H1 (cell line): ENCODE measurements at regions of chr5 and their contacts with region 1.

Region 1: DNA sequence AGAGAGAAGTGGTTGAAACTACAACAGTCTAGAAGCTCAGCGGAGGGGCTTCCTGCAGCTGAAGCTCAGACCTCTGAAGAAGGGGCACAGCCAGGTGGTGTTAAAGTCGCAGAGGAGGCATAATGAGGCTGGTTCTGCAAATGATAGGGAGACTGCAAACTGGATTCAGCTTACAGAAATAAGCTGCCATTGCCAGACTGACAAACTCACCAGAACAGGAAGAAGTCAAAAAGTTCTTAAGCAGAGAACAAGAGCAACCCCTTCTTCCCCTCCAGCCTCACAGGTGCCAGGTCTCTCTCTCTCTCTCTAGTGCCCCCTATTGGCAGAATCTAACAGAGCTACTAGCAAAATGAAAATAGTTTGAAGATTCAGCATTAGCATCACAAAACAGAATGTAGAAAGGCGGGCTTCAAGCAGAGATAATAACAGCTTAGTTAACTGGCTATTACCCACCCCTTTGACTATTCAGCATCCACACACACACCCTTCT is 76.7 kb downstream of the GRAMD2B start:
- DNase-seq: peak; percentile 9 to 48
- H3K4me3 ChIP-seq: no peak overlapping the region
- H3K27ac ChIP-seq: no peak overlapping the region
- H3K4me1 ChIP-seq: no peaks in the 10 kb centered on the region; a peak in 1 of 7 replicates
- H3K27me3 ChIP-seq: no peaks in the 10 kb centered on the region
- CTCF ChIP-seq: peak in 2 of 3 experiments; percentile 59 to 83; a peak in 3 of 4 replicates
- EP300 ChIP-seq: no peak
- POLR2A ChIP-seq: no peak
- RAD21 ChIP-seq: peak; percentile 56 to 64

Region 2: GRCh38 chr5:126248611-126249010 is 251.3 kb before region 1 on chr5:
- CTCF ChIA-PET with region 1: no interaction called
- POLR2A ChIA-PET with region 1: no interaction called
- DNase-seq: no peak
- H3K4me3 ChIP-seq: no peak overlapping the region
- H3K27ac ChIP-seq: no peak overlapping the region
- H3K4me1 ChIP-seq: no peaks in the 10 kb centered on the region
- H3K27me3 ChIP-seq: no peaks in the 10 kb centered on the region
- CTCF ChIP-seq: no peak
- EP300 ChIP-seq: no peak
- POLR2A ChIP-seq: no peak
- RAD21 ChIP-seq: no peak

Region 3: DNA sequence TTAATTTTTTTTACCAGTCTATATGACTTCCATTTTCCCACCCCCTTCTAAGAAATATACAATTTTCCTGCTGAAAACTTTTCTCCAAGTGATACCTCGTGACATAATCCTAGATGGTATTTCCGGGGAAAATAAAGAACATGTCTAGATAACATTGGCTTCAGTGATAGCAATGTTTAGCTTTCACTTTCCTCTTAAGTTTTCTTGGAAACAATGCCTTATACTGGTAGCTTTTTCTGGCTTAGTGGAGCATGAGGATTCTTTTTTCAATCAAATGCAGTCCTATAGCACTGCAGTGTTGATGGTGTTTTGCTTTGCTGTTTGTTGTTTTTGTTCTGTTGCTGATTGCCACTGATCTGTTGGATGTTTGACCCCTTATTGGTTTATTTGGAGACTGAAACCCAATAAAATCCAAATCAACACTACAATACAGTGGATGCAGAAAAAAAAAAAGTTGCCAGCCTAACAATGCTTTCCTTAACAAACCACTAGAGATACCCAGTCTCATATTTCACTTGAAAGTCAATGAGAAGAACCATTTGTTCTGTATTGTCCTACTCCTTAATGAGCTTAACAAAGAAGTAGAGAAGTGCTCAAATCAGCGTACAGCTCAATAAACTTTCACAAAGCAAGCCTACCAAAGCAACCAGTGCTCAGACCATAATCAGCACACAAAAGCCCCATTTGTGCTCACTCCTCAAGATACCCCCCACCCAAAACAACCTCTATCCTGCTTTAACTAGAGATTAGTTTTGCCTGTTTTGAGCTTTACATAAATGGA is 150.9 kb before region 1 on chr5:
- CTCF ChIA-PET with region 1: interaction called, 26 read pairs
- POLR2A ChIA-PET with region 1: no interaction called
- DNase-seq: no peak
- H3K4me3 ChIP-seq: peak overlapping the region in 1 of 4 experiments; percentile 19; a peak in 1 of 8 replicates
- H3K27ac ChIP-seq: no peak overlapping the region; the same call in 1 of the 2 replicates
- H3K4me1 ChIP-seq: peaks cover 0 to 13% (median 10%) of the 10 kb centered on the region in 4 experiments; a peak in 5 of 7 replicates
- H3K27me3 ChIP-seq: no peaks in the 10 kb centered on the region
- CTCF ChIP-seq: no peak
- EP300 ChIP-seq: no peak
- POLR2A ChIP-seq: no peak
- RAD21 ChIP-seq: no peak

Region 4: GRCh38 chr5:126422989-126423788 is 76.7 kb before region 1 on chr5 and contains the start of gene GRAMD2B:
- CTCF ChIA-PET with region 1: interaction called, 11 read pairs
- POLR2A ChIA-PET with region 1: no interaction called
- DNase-seq: peak; percentile 64 to 82
- H3K4me3 ChIP-seq: peak within 1 kb of the TSS; percentile 55 to 88 (median 82)
- H3K27ac ChIP-seq: peak within 1 kb of the TSS; percentile 77
- H3K4me1 ChIP-seq: peaks cover 0 to 7% (median 3%) of the 10 kb centered on the region in 4 experiments; a peak in 4 of 7 replicates
- H3K27me3 ChIP-seq: no peaks in the 10 kb centered on the region
- CTCF ChIP-seq: no peak
- EP300 ChIP-seq: no peak
- POLR2A ChIP-seq: peak in 1 of 2 experiments; percentile 79; a peak in 2 of 3 replicates
- RAD21 ChIP-seq: 0 out of 4 replicates have a peak, but pooled peaks of 1 of the 2 experiments have one; percentile 2
- total RNA-seq, gene GRAMD2B: 9.4 and 11.7 TPM in 2 replicates

Region 5: GRCh38 chr5:126519634-126520592 is 20.0 kb after region 1 on chr5:
- CTCF ChIA-PET with region 1: interaction called, 87 read pairs
- POLR2A ChIA-PET with region 1: interaction called, 3 read pairs
- DNase-seq: peak in 1 of 2 experiments; percentile 41
- H3K4me3 ChIP-seq: no peak overlapping the region
- H3K27ac ChIP-seq: no peak overlapping the region
- H3K4me1 ChIP-seq: peaks cover 0 to 2% (median 0%) of the 10 kb centered on the region in 4 experiments; a peak in 2 of 7 replicates
- H3K27me3 ChIP-seq: no peaks in the 10 kb centered on the region
- CTCF ChIP-seq: no peak
- EP300 ChIP-seq: no peak
- POLR2A ChIP-seq: no peak
- RAD21 ChIP-seq: no peak

Region 6: DNA sequence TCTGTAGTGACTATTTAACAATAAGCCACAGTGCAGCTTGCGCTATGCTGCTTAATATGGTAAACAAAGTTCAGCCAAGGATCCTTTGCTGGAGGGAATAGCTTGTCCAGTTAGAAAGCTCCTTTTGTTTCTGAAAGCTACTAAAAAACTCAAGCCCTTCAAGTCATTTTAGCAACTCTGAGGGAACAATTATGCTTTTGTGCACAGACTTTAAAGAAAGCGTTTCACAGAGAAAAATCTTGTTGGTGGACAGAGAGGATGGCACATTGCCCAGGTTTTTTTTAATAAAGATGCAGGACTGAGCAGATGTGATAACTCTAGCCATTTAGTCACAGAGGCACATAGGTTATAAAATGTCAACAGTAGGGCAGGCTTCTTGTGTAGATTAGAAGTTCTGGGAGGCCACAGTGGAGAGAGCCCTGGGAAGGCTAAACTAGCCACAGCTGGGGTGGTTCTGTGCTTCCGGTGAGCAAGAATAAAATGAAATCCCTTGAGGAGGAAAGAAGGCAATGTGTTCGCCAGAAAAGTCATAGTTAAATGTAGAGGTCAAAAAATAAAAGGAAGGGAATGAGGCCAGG is 31.7 kb after region 1 on chr5:
- CTCF ChIA-PET with region 1: interaction called, 34 read pairs
- POLR2A ChIA-PET with region 1: no interaction called
- DNase-seq: peak in 1 of 2 experiments; percentile 29
- H3K4me3 ChIP-seq: no peak overlapping the region
- H3K27ac ChIP-seq: no peak overlapping the region
- H3K4me1 ChIP-seq: no peaks in the 10 kb centered on the region
- H3K27me3 ChIP-seq: no peaks in the 10 kb centered on the region
- CTCF ChIP-seq: no peak
- EP300 ChIP-seq: no peak
- POLR2A ChIP-seq: no peak
- RAD21 ChIP-seq: no peak

Region 7: DNA sequence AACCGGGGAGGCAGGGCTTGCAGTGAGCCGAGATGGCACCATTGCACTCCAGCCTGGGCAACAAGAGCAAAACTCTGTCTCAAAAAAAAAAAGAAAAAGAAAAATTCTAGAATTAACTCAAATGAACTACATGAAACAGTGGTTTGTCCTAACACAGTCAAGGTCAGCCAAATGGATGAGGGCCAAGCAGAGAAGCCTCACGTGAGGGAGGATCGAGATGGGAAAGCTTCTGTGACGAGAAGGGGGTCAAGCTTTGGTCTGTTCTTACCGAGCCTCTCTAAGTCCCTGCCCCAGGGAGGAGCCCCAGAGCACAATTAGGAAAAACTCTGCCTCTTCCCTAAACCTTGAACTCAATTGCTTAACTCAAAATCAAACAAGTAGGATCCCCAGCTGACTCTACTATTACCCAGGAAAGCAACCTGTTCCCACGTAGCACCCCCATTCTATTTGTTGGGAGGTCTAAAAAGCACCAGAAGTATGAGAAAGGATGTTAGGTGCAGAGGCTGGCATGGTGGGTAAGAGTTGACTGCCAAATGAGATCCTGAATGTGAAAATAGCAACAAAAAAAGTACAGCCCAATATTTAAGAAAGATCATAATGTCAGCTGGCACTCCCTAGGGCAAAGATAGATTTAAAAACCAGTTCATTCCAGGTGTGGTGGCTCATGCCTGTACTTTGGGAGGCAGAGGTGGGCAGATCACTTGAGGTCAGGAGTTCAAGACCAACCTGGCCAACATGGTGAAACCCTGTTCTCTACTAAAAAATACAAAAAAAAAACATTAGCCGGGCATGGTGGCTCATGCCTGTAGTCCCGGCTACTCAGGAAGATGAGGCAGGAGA is 87.9 kb after region 1 on chr5:
- CTCF ChIA-PET with region 1: no interaction called
- POLR2A ChIA-PET with region 1: no interaction called
- DNase-seq: no peak
- H3K4me3 ChIP-seq: no peak overlapping the region
- H3K27ac ChIP-seq: no peak overlapping the region
- H3K4me1 ChIP-seq: peaks cover 0 to 8% (median 0%) of the 10 kb centered on the region in 4 experiments; a peak in 1 of 7 replicates
- H3K27me3 ChIP-seq: no peaks in the 10 kb centered on the region
- CTCF ChIP-seq: no peak
- EP300 ChIP-seq: no peak
- POLR2A ChIP-seq: no peak
- RAD21 ChIP-seq: no peak